ENCODE measurements at regions of chr14 and their contacts with region 1.

Region 1: DNA sequence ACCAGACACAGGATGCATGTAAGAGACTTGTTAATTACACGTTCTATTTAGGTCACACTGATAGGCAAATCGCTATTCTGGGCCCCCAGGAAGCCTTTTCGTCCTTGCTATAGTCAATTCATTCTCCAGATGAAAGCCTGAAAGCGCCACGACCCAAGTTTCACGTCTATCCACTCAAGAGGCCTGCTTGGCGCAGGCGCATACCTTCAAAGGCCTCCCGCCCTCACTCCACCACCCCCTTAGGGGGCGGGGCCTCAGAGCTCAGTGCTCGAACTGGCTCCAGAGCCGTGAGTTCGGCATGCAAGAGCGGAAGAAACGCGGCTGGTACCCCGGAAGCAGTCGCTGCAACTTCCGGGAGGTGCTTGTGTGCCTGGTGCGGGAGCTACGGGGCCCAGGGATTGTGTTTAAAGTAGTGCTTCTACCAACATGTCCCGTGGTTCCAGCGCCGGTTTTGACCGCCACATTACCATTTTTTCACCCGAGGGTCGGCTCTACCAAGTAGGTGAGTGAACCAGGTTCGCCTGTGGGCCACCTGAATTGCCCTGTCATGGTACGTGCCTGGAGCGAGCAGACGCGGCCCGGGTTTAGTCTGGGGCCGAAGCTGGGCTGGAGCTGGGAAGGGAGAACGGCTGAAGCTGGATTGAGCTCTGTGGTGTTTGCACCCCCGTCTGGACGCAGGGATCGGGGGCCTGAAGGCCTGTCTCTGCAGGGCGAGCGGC is at the start of gene PSMA6:
- DNase-seq: peak; percentile 100
- H3K4me3 ChIP-seq: peak within 1 kb of the TSS; percentile 96
- H3K27ac ChIP-seq: peak within 1 kb of the TSS; percentile 99
- H3K4me1 ChIP-seq: peaks cover 69% of the 10 kb centered on the region
- CTCF ChIP-seq: no peak
- total RNA-seq, gene PSMA6: 208 and 216 TPM in 2 replicates

Region 2: DNA sequence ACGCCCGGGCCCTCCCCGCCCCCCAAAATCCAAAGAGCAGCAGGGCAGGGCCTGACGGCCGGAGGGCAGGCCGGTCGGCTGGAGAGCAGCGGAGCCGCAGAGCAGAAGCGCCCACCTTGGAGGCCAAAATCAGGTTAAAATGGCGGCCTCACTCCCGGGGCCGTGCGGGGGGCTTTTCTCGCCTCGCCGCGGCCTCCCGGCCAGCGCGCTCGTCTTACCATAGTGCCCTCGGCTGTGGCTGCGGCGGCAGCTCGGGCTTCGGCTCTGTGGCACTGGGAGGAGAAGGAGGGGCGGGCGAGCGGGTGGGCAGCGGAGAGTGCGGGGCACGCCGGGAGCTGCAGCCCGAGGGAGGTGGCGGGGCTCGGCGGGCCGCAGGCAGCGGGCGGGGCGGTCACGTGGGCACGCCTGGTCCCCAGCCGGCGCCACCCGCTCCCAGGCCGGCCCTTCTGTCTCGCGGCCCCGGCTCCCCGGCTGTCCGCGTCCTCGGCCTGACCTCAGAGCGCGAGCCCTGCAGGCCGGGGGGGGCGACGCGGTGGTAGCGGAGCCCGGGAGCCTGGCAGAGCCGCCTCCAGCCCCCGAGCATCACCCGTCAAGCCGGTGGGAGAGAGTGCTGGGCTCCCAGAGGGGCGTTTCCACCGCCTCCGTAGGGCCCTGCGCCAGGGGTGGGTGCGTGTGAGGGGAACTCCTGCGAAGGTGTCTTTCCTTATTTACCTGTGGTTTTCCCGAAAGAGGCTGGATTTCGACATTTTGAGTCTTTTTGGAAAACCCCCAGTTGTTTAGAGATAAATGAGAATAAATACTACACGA is 577.7 kb before region 1 on chr14 and contains the start of gene CFL2:
- CTCF ChIA-PET with region 1: no interaction called
- POLR2A ChIA-PET with region 1: no interaction called
- intact Hi-C with region 1: loop called (anchors 5 kb)
- DNase-seq: peak; percentile 79
- H3K4me3 ChIP-seq: peak within 1 kb of the TSS; percentile 92
- H3K27ac ChIP-seq: peak within 1 kb of the TSS; percentile 87
- H3K4me1 ChIP-seq: peaks cover 48% of the 10 kb centered on the region
- CTCF ChIP-seq: no peak
- total RNA-seq, gene CFL2: 7.1 and 19.6 TPM in 2 replicates

Region 3: GRCh38 chr14:35140718-35141581 is 151.3 kb before region 1 on chr14:
- CTCF ChIA-PET with region 1: interaction called, 10 read pairs
- POLR2A ChIA-PET with region 1: no interaction called
- intact Hi-C with region 1: no loop called
- DNase-seq: peak; percentile 59
- H3K4me3 ChIP-seq: no peak overlapping the region
- H3K27ac ChIP-seq: no peak overlapping the region
- H3K4me1 ChIP-seq: no peaks in the 10 kb centered on the region
- CTCF ChIP-seq: peak; percentile 88